ENCODE measurements at regions of chr2 and their contacts with region 1.

Region 1: GRCh38 chr2:152335010-152335725 is at the start of gene FMNL2:
- DNase-seq: peak; percentile 73
- ATAC-seq: peak; percentile 88
- H3K4me3 Mint-ChIP-seq: peak within 1 kb of the TSS; percentile 85
- H3K27ac Mint-ChIP-seq: peak within 1 kb of the TSS; percentile 67
- H3K4me1 Mint-ChIP-seq: peaks cover 12% of the 10 kb centered on the region
- H3K27me3 Mint-ChIP-seq: peaks cover 5% of the 10 kb centered on the region
- CTCF ChIP-seq: no peak
- total RNA-seq, gene FMNL2: 2.8 and 4.0 TPM in 2 replicates

Region 2: DNA sequence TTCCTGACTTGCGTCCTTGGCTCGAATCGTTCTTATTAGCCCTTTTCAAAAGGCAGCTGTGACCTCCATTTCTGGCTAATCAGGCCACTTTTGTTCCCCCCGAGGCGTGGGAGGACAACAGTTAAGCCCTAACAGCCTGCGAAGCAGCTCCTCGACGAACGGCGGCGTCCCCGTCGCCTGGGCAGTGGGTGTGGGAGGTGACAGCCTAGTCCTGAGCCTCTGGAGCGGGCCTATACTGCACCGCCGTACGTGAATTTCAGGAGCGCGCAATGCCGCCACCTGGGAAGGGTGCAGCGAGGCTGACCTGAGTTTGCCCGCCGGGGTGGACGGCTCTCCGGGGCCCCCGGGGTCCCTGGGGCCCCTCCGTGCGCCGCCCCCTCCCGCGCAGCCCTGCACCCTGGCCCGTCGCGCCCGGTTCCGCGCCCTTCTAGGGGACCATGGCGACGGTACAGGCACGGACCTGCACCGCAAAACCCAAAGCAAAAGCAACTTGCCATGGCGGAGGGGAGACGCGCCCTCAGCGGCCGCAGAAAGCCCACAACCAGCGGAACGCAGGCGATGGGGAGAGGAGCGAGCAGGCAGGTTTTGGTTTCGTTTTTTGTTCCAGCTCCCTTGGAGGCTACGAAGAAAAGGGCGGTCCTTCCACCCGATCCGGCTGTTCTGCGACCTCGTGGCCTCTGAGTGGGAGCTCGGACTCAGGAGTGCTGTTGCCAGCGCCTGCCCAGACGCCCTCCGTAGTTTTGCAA is 1073.8 kb before region 1 on chr2 and contains the start of gene RBM43:
- CTCF ChIA-PET with region 1: no interaction called
- POLR2A ChIA-PET with region 1: no interaction called
- intact Hi-C with region 1: loop called (anchors 5 kb)
- DNase-seq: peak; percentile 58
- ATAC-seq: peak; percentile 90
- H3K4me3 Mint-ChIP-seq: peak within 1 kb of the TSS; percentile 93
- H3K27ac Mint-ChIP-seq: peak within 1 kb of the TSS; percentile 94
- H3K4me1 Mint-ChIP-seq: peaks cover 20% of the 10 kb centered on the region
- H3K27me3 Mint-ChIP-seq: no peaks in the 10 kb centered on the region
- CTCF ChIP-seq: no peak
- total RNA-seq, gene RBM43: 4.8 and 5.0 TPM in 2 replicates

Region 3: DNA sequence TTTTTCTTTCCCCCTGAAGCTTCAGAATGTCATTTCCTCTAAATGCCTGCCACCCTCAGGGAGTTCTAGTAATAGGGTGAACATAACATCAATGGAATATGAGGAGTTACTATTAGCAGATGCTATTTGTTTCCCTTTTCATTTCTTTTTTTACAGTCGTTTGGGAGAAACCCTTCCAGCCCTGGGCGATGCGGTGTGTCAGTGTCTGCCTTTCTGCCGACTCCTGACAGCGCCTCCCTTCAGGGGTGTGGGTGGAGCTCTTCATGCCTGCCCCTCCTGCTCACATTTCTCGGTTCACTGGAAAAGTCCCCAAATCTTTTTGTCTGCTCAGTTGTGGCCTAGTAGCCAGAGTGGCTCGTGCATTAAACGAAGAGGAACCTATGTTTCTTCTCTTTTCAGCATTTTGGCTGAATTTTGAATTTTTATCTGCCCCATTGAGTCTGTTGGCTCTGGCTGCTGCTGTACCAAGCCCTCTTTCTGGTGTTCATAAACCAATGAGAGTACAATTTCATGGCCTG is 72.1 kb after region 1 on chr2:
- CTCF ChIA-PET with region 1: interaction called, 3 read pairs
- POLR2A ChIA-PET with region 1: no interaction called
- intact Hi-C with region 1: loop called (anchors 1 kb)
- DNase-seq: no peak
- ATAC-seq: peak; percentile 91
- H3K4me3 Mint-ChIP-seq: peak overlapping the region; percentile 73
- H3K27ac Mint-ChIP-seq: peak overlapping the region; percentile 78
- H3K4me1 Mint-ChIP-seq: peaks cover 31% of the 10 kb centered on the region
- H3K27me3 Mint-ChIP-seq: no peaks in the 10 kb centered on the region
- CTCF ChIP-seq: no peak

Region 4: GRCh38 chr2:152497481-152498052 is 162.4 kb after region 1 on chr2:
- CTCF ChIA-PET with region 1: no interaction called
- POLR2A ChIA-PET with region 1: no interaction called
- intact Hi-C with region 1: loop called (anchors 5 kb)
- DNase-seq: no peak
- ATAC-seq: peak; percentile 28
- H3K4me3 Mint-ChIP-seq: no peak overlapping the region
- H3K27ac Mint-ChIP-seq: no peak overlapping the region
- H3K4me1 Mint-ChIP-seq: peaks cover 48% of the 10 kb centered on the region
- H3K27me3 Mint-ChIP-seq: no peaks in the 10 kb centered on the region
- CTCF ChIP-seq: no peak

Region 5: GRCh38 chr2:152717228-152718075 is 382.3 kb after region 1 on chr2 and contains the start of gene PRPF40A:
- CTCF ChIA-PET with region 1: no interaction called
- POLR2A ChIA-PET with region 1: no interaction called
- intact Hi-C with region 1: loop called (anchors 1 kb)
- DNase-seq: peak; percentile 97
- ATAC-seq: peak; percentile 76
- H3K4me3 Mint-ChIP-seq: peak within 1 kb of the TSS; percentile 100
- H3K27ac Mint-ChIP-seq: peak within 1 kb of the TSS; percentile 98
- H3K4me1 Mint-ChIP-seq: peaks cover 51% of the 10 kb centered on the region
- H3K27me3 Mint-ChIP-seq: no peaks in the 10 kb centered on the region
- CTCF ChIP-seq: no peak
- total RNA-seq, gene PRPF40A: 126 and 129 TPM in 2 replicates